Posterior cingulate gyrus (tissue), 11 donors: ENCODE measurements at regions of chr6 and their contacts with region 1.

Region 1: DNA sequence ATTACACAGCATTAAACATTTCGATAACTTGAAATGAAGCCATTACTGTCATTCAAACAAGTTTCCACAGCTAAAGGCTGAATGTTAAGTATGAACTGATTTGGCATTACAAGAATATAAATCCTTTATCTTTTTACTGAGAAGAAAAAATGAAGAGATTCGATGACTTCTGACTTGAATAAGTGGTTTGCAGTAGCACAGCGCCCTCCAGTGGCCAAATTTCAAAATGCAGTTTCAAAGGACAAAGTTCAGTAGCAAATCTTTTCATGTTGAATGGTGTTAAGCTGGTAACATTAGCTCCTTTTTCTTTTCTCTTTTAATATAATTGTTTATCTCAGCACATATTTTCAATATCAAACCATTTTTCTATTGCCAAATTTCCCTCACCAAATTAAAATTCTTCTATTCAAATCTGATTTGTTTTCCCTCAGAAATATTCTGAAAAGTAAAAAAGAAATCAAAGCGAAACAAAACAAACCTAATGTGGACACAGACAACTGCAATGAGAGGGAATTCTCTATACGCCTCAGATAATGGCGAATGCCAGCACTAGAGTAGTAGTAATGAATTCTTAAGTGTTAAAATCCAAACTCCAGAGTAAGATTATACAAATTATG is 145.7 kb downstream of the BTBD9 start:
- DNase-seq: peak in 9 of 10 donors; percentile 35 to 95 (median 87)

Region 2: GRCh38 chr6:37698261-37699137 is 795.5 kb before region 1 on chr6:
- intact Hi-C with region 1: loop called (anchors 5 kb)
- DNase-seq: peak in 3 of 10 donors; percentile 41 to 82 (median 44)

Region 3: GRCh38 chr6:37791156-37791919 is 702.7 kb before region 1 on chr6:
- intact Hi-C with region 1: loop called (anchors 2 kb)
- DNase-seq: peak; percentile 89 to 99 (median 92)

Region 4: GRCh38 chr6:38034274-38034914 is 459.6 kb before region 1 on chr6:
- intact Hi-C with region 1: loop called (anchors 5 kb)
- DNase-seq: peak in 1 of 10 donors; percentile 20

Region 5: GRCh38 chr6:38234934-38235682 is 258.9 kb before region 1 on chr6:
- intact Hi-C with region 1: no loop called
- DNase-seq: no peak

Region 6: DNA sequence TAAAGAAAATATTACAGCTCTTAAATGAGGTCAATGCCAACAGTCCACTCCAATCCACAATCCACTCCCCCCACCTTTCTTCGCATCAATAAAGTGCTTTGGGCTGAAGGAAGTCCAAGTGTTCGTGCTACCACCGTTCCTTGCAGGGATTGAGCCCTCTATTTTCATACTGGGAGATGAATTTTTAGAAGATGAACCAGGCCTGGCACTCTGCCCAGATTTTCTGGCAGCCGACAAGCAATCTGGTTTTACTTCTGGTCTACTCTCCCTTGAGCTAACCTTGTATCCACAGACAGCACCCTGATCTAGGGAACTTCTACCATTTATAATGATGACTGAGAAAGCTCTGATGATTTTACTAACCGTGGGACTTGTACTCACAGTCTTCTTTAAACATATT is 73.4 kb after region 1 on chr6:
- intact Hi-C with region 1: loop called (anchors 5 kb)
- DNase-seq: peak; percentile 32 to 91 (median 62)

Region 7: GRCh38 chr6:39018107-39018506 is 524.1 kb after region 1 on chr6:
- intact Hi-C with region 1: no loop called
- DNase-seq: no peak